ENCODE measurements at regions of chr5 and their contacts with region 1.

Region 1: GRCh38 chr5:142548739-142549275 is 137.1 kb downstream of the FGF1 start:
- DNase-seq: peak; percentile 90
- H3K4me3 Mint-ChIP-seq: no peak overlapping the region
- H3K27ac Mint-ChIP-seq: no peak overlapping the region
- H3K4me1 Mint-ChIP-seq: peaks cover 24% of the 10 kb centered on the region
- H3K27me3 Mint-ChIP-seq: no peaks in the 10 kb centered on the region
- CTCF ChIP-seq: peak; percentile 91

Region 2: DNA sequence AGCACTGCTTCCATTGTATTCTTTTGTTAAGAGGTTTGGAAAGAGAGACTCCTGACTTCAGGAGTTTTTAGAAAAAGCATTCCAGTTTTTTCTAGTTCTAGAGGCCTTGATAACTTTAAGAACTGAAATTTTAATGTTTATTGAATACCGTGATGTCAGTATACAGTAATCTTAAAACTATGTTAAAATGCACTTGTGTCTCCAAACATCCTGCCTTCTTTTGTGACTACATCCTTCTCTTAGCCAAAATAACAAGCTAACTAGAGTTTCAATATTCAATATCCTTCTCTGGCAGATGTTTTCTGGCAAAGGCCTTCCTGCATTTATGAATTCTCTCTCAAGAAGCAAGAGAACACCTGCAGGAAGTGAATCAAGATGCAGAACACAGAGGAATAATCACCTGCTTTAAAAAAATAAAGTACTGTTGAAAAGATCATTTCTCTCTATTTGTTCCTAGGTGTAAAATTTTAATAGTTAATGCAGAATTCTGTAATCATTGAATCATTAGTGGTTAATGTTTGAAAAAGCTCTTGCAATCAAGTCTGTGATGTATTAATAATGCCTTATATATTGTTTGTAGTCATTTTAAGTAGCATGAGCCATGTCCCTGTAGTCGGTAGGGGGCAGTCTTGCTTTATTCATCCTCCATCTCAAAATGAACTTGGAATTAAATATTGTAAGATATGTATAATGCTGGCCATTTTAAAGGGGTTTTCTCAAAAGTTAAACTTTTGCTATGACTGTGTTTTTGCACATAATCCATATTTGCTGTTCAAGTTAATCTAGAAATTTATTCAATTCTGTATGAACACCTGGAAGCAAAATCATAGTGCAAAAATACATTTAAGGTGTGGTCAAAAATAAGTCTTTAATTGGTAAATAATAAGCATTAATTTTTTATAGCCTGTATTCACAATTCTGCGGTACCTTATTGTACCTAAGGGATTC is 397.1 kb before region 1 on chr5:
- CTCF ChIA-PET with region 1: interaction called, 5 read pairs
- intact Hi-C with region 1: loop called (anchors 1 kb)
- DNase-seq: peak; percentile 78
- H3K4me3 Mint-ChIP-seq: no peak overlapping the region
- H3K27ac Mint-ChIP-seq: no peak overlapping the region
- H3K4me1 Mint-ChIP-seq: no peaks in the 10 kb centered on the region
- H3K27me3 Mint-ChIP-seq: no peaks in the 10 kb centered on the region
- CTCF ChIP-seq: peak; percentile 80

Region 3: GRCh38 chr5:142167458-142167857 is 381.3 kb before region 1 on chr5:
- CTCF ChIA-PET with region 1: interaction called, 3 read pairs
- intact Hi-C with region 1: loop called (anchors 5 kb)
- DNase-seq: no peak
- H3K4me3 Mint-ChIP-seq: no peak overlapping the region
- H3K27ac Mint-ChIP-seq: no peak overlapping the region
- H3K4me1 Mint-ChIP-seq: peaks cover 6% of the 10 kb centered on the region
- H3K27me3 Mint-ChIP-seq: no peaks in the 10 kb centered on the region
- CTCF ChIP-seq: no peak

Region 4: DNA sequence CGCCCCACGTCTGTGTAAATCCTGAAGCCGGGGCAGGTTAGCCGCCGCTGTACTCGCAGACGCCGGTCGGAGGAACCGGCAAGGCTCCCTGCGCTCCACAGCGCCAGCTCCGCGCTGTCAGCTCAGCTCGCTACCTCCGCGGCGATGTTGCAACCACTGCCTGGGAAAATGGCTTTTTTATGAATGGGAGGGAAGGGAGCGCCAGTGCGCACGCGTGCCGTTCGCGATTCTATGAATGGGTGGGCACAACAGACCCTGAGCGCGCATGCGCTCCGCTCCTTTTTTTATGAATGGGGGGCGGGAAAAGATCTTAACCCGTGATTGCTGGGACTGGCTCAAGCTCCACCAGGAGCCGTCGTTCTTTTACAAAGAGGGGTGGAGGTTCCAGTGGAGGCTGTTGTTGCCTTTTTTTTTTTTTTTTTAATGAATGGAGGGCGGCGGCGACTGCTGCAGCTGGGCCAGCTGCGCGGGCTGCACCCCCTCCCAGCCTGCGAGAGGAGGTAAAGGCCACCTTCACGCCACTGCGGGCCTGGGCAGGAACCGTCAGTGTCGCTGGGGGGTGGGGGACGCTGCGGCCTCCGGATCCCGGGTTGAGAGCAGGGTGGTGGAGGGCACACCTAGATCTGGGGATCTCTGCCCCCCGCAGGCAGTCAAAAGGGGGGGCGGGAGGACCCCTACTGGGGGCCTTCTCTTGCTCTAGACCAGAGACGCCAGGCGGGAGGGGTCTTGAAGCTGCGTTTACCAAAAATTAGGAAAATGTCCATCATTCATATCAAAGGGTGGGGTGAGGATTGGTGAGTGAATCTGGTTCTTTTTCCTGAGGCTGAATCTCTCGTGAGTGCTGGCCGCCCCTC is 223.7 kb before region 1 on chr5 and contains the start of gene SPRY4:
- CTCF ChIA-PET with region 1: interaction called, 16 read pairs
- intact Hi-C with region 1: loop called (anchors 1 kb)
- DNase-seq: peak; percentile 97
- H3K4me3 Mint-ChIP-seq: peak within 1 kb of the TSS; percentile 98
- H3K27ac Mint-ChIP-seq: peak within 1 kb of the TSS; percentile 92
- H3K4me1 Mint-ChIP-seq: peaks cover 44% of the 10 kb centered on the region
- H3K27me3 Mint-ChIP-seq: no peaks in the 10 kb centered on the region
- CTCF ChIP-seq: no peak
- total RNA-seq, gene SPRY4: 23.6 and 29.4 TPM in 2 replicates

Region 5: DNA sequence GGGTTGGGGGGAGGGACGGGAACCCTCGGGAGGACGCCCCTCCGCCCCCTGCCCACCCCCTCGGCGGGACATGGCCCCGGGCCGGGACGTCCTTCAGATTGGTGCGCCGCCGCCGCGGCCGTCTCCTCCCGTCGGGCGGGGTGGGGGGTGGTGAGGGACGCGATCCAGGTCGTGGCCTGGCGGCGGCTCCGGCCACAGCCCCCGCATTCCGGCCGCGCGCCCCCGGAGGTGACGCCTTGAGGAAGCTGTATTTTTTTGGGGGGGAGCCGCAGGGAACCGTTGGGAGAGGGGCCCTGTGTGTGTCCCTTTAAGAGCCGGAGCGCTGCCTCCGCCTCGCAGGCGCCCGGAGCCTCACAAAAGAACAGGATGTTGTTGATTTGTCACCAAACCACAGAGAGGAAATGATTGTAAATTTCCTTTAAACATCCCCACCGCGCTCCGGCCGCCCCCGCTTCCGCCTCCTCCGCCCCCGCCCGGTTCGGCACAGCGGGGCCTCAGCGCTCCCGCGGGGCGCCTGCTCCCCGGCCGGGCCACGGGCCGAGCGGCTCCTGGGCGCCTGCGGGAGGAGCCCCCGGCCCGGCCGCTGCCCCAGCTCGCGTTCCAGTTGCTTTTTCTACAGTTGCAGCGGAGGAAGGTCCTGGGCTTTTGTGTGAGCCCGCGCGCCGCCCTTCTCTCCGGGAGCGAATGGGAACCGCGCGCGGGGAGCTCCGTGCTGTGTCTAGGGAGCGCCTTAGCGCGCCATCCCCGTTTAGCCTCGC is 191.9 kb before region 1 on chr5:
- CTCF ChIA-PET with region 1: interaction called, 5 read pairs
- intact Hi-C with region 1: loop called (anchors 1 kb)
- DNase-seq: peak; percentile 87
- H3K4me3 Mint-ChIP-seq: peak overlapping the region; percentile 76
- H3K27ac Mint-ChIP-seq: peak overlapping the region; percentile 82
- H3K4me1 Mint-ChIP-seq: peaks cover 53% of the 10 kb centered on the region
- H3K27me3 Mint-ChIP-seq: no peaks in the 10 kb centered on the region
- CTCF ChIP-seq: no peak

Region 6: GRCh38 chr5:142403571-142403971 is 145.2 kb before region 1 on chr5:
- CTCF ChIA-PET with region 1: no interaction called
- intact Hi-C with region 1: loop called (anchors 2 kb)
- DNase-seq: peak; percentile 32
- H3K4me3 Mint-ChIP-seq: peak overlapping the region; percentile 15
- H3K27ac Mint-ChIP-seq: peak overlapping the region; percentile 62
- H3K4me1 Mint-ChIP-seq: peaks cover 24% of the 10 kb centered on the region
- H3K27me3 Mint-ChIP-seq: no peaks in the 10 kb centered on the region
- CTCF ChIP-seq: no peak

Region 7: GRCh38 chr5:142507531-142508372 is 41.1 kb before region 1 on chr5:
- CTCF ChIA-PET with region 1: no interaction called
- intact Hi-C with region 1: loop called (anchors 2 kb)
- DNase-seq: peak; percentile 71
- H3K4me3 Mint-ChIP-seq: peak overlapping the region; percentile 66
- H3K27ac Mint-ChIP-seq: peak overlapping the region; percentile 83
- H3K4me1 Mint-ChIP-seq: peaks cover 66% of the 10 kb centered on the region
- H3K27me3 Mint-ChIP-seq: no peaks in the 10 kb centered on the region
- CTCF ChIP-seq: no peak